ENCODE measurements at regions of chr2 and their contacts with region 1.

Region 1: DNA sequence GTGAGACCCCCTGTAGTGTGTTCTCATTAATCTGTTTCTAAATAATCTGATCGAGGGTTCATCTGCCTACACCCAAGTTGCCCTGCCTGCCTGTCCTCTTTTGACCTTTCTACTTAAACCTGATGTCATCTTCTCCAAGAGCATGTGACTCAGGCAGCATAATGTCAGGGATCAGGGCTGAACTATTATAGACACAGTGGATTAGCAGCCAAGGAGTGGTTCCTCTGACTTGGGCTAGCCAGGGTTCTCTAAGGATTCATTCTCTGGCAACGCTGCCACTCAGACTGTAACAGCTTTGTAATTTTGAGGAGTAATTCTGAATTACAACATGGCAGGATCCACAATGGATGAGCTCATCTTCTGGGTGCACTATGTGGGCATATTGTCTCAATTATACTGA is 124.0 kb downstream of the MDH1 start:
- DNase-seq: no peak
- ATAC-seq: no peak
- H3K4me3 ChIP-seq: no peak overlapping the region
- H3K27ac ChIP-seq: no peak overlapping the region
- H3K4me1 ChIP-seq: no peaks in the 10 kb centered on the region
- H3K27me3 ChIP-seq: no peaks in the 10 kb centered on the region; the same call in 1 of the 2 replicates
- CTCF ChIP-seq: no peak

Region 2: DNA sequence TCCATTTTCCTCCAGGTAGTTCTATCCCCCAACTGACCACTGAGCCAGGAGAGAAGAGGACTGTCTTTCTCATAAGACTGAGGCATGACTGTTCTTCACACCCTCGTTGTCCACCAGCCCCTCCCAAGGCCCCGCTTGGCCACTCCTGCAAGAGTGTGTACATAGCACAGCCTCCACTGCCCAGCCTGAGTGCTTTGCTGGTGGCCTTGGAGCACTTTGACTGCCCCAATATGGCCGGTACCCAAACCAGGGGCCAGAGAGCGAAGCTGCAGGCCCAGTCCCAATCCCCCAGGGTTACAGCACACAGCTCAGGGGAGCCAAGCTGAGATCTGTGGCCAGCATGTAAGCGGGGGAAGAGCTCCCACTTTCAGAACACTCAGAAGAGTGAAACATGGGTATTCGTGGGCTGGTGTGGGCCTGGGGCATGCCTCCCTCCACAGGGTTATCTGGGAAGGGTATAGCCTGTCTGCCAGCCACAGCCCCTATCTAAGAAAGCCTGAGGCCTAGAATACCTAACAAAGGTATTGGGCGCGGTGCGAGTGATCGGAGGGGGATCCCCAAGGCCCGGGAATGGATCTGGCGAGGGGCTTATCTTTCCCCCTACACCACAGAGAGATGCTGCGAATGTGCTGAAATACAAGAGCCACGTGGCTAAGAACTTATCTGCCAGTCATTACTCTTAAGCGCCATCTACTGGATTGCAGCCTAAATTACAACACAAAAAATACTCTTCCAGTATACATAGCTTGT is 288.2 kb before region 1 on chr2:
- CTCF ChIA-PET with region 1: no interaction called
- POLR2A ChIA-PET with region 1: interaction called, 12 read pairs
- in situ Hi-C with region 1: no loop called
- intact Hi-C with region 1: no loop called
- DNase-seq: peak; percentile 25
- ATAC-seq: peak; percentile 84
- H3K4me3 ChIP-seq: no peak overlapping the region
- H3K27ac ChIP-seq: no peak overlapping the region
- H3K4me1 ChIP-seq: no peaks in the 10 kb centered on the region
- H3K27me3 ChIP-seq: no peaks in the 10 kb centered on the region
- CTCF ChIP-seq: peak; percentile 84

Region 3: GRCh38 chr2:63866009-63866742 is 153.4 kb after region 1 on chr2:
- CTCF ChIA-PET with region 1: no interaction called
- POLR2A ChIA-PET with region 1: no interaction called
- in situ Hi-C with region 1: no loop called
- intact Hi-C with region 1: no loop called
- DNase-seq: no peak
- ATAC-seq: no peak
- H3K4me3 ChIP-seq: no peak overlapping the region
- H3K27ac ChIP-seq: no peak overlapping the region
- H3K4me1 ChIP-seq: no peaks in the 10 kb centered on the region
- H3K27me3 ChIP-seq: no peaks in the 10 kb centered on the region
- CTCF ChIP-seq: no peak

Measured in Panc1 (cell line).